ENCODE measurements at regions of chr13 and their contacts with region 1.

Region 1: DNA sequence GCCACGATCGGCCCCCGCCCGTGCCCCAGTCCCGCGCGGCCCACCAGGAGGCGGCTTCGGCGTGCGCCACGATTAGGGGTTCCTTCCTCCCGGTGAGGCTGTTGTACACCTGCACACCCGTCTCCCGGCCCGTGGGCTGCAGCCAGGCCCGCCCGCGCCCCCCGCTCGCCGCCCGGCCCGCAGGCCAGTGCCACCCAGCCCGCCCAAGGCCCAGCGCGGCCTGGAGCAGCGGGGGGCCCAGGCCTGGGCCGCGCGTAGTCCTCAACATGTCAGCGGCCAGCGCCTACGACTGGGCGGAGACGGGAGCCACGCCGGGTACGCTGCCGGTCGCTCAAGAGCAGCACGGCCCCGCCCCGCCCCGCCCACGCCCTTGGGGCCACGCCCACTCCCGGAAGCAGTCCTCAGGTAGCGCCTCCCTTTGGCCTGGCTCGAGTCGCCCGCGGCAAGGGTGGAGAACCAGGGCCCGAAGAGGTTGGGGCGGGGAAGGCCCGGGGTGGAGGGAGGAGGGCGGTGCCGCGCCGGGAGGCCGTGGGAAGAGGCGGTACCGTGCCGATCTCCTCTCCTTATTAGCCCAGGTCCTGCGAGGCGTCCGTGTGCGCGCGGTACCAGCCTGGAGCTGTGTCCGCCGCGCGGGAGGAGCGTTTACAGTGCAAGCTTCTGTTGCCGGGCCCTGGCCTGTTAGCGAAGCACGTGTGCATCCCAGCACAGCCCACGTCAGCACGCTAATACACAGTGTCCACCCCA is at the start of gene CARS2:
- DNase-seq: peak; percentile 94 to 97
- ATAC-seq: peak; percentile 97 to 99 (median 98)
- H3K4me3 ChIP-seq: peak within 1 kb of the TSS; percentile 69 to 87 (median 76)
- H3K27ac ChIP-seq: peak within 1 kb of the TSS; percentile 44 to 93 (median 85)
- H3K4me1 ChIP-seq: peaks cover 0 to 48% (median 22%) of the 10 kb centered on the region in 9 donors
- H3K27me3 ChIP-seq: no peaks in the 10 kb centered on the region
- CTCF ChIP-seq: peak in 3 of 9 donors; percentile 10 to 28 (median 17)
- total RNA-seq, gene CARS2: 35.2 to 53.5 (median 42.8) TPM

Region 2: DNA sequence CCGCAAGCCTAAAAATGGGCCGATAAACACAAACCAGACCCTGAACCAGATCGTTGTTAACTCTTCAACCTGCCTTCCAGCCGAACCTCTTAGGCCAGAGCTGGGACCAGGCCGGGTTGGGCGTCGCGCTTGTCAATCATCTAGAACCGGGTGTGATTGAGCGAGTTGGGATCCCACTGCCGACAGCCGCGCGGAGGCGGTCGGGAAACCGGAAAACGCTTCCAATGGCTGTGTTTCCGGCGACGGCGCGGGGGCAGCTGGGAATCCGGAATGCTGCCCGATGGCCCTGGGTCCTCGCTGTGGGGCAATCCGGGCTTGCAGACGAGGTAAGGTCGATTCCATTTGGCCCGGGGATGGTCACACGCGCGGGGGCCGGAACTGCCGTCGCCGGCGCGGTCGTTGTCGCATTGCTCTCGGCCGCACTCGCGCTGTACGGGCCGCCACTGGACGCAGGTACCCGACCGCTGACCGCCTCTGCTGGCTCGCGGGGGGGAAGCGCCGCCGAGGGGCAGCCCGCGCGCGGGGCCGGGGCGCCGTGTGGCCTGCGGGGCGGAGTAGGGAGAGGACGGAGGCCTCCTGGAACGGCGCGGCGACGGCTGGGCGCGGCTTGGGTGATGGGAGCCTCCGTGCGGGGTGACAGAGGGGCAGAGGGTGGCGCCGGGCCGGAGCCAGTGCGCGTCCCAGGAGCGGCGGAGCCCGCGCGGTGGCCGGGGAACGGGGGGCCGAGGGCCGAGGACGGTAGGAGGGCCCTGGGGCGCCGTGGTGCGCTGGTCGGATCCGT is 90.5 kb before region 1 on chr13 and contains the start of gene NAXD:
- intact Hi-C with region 1: loop called in 6 of 10 experiments (anchors 5 to 10 kb)
- DNase-seq: peak; percentile 95 to 96
- ATAC-seq: peak; percentile 93 to 98 (median 97)
- H3K4me3 ChIP-seq: peak within 1 kb of the TSS; percentile 69 to 98 (median 82)
- H3K27ac ChIP-seq: peak within 1 kb of the TSS; percentile 78 to 98 (median 92)
- H3K4me1 ChIP-seq: peaks cover 0 to 48% (median 37%) of the 10 kb centered on the region in 9 donors
- H3K27me3 ChIP-seq: peaks cover 0 to 9% (median 0%) of the 10 kb centered on the region in 7 donors
- CTCF ChIP-seq: peak in 1 of 9 donors; percentile 7
- total RNA-seq, gene NAXD: 24.7 to 33.9 (median 27.8) TPM

Region 3: GRCh38 chr13:110628477-110628793 is 77.6 kb before region 1 on chr13:
- intact Hi-C with region 1: loop called in 1 of 10 experiments (anchors 10 kb)
- DNase-seq: no peak
- ATAC-seq: peak; percentile 49 to 87 (median 78)
- H3K4me3 ChIP-seq: no peak overlapping the region
- H3K27ac ChIP-seq: peak overlapping the region in 3 of 10 donors; percentile 8 to 39 (median 21)
- H3K4me1 ChIP-seq: peaks cover 2 to 38% (median 21%) of the 10 kb centered on the region in 9 donors
- H3K27me3 ChIP-seq: no peaks in the 10 kb centered on the region
- CTCF ChIP-seq: no peak